Activated naive CD4-positive, alpha-beta T cell treated with anti-CD3 and anti-CD28 coated beads for 36 hours (primary cell): ENCODE measurements at regions of chr19 and their contacts with region 1.

Region 1: GRCh38 chr19:5719961-5720790 is at the starts of genes CATSPERD and LONP1:
- DNase-seq: peak; percentile 99
- H3K4me3 Mint-ChIP-seq: peak within 1 kb of the TSS; percentile 89
- H3K27ac Mint-ChIP-seq: peak within 1 kb of the TSS; percentile 98
- H3K4me1 Mint-ChIP-seq: peaks cover 33% of the 10 kb centered on the region
- H3K27me3 Mint-ChIP-seq: no peaks in the 10 kb centered on the region
- total RNA-seq, gene CATSPERD: not detected
- total RNA-seq, gene LONP1: 223 to 229 TPM

Region 2: DNA sequence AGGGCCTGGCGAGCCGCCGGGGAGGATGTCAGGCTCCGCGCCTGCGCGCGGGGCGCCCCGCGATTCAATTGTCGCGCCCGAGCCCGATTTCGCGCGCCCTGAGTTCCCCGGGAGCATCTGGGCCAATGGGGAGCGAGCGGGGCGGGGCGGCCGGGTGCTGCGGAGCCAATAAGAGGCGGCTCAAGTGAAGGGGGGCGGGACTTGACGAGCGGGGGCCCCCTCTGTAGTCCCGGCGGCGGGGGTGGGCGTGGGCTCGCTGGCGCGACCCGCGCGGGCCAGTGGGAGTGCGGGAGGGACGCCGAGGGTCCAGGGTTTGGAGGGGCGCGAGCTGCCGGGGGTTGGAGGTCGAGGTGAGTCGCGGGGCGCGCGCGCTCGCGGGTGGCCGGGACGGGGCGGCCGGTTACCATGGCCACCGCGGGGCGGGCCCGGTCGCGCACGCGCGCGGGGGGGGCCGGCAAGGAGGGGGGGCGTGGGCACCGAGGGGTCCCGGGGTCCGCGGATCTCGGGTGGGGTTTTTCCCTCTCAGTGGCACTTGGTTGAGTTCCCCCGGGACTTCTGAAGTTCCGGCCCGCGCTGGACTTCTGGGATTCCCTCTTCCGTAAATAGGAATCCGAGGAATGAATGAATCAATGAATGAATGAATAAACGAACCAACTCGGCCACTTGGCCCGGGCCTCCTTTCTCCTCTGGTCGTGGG is 810.1 kb before region 1 on chr19:
- CTCF ChIA-PET with region 1: no interaction called
- intact Hi-C with region 1: loop called (anchors 1 kb)
- DNase-seq: peak; percentile 97
- H3K4me3 Mint-ChIP-seq: peak overlapping the region; percentile 85
- H3K27ac Mint-ChIP-seq: peak overlapping the region; percentile 86
- H3K4me1 Mint-ChIP-seq: peaks cover 53% of the 10 kb centered on the region
- H3K27me3 Mint-ChIP-seq: no peaks in the 10 kb centered on the region

Region 3: GRCh38 chr19:5680437-5681368 is 39.5 kb before region 1 on chr19 and contains the starts of genes HSD11B1L and MICOS13:
- CTCF ChIA-PET with region 1: interaction called, 3 read pairs
- intact Hi-C with region 1: loop called (anchors 1 kb)
- DNase-seq: peak; percentile 99
- H3K4me3 Mint-ChIP-seq: peak within 1 kb of the TSS; percentile 98
- H3K27ac Mint-ChIP-seq: peak within 1 kb of the TSS; percentile 91
- H3K4me1 Mint-ChIP-seq: peaks cover 20% of the 10 kb centered on the region
- H3K27me3 Mint-ChIP-seq: no peaks in the 10 kb centered on the region
- total RNA-seq, gene HSD11B1L: 2.6 to 3.0 TPM
- total RNA-seq, gene MICOS13: 43.3 to 44.8 TPM

Region 4: DNA sequence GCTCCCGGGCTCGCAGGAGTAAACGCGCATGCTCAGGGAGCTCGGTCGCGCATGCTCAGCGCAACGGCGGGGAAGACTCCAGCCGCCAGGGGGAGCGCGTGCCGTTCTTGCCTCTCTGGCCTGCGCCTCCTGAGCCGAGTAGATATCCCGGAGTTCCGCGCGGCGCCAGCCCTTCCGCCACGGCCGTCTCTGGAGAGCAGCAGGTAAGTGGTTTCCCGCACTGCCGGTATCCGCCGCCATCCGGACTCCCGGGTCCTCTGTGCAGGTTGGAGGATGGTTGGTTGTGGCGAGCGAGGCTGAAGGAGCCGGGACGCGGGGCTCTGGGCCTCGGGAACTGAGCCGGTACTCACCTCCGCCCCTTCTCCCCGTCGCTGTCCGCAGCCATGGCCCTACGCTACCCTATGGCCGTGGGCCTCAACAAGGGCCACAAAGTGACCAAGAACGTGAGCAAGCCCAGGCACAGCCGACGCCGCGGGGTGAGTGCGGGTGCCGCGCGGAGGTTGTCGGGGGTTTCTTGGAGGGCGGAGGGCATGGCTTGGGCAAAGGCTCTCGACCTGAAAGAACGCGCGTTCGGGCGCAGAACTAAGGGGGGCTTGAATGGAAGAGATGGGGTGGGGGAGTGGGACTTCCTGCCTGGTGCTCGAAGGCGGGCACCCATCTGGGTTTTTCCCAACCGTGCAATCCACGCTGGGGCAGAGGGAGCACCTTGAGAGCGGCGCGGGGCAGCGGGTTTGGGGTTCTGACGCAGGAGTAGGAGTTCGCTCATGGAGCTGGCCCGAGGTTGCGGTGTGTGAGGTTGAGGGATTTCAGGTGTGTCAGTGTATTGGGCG is 29.8 kb before region 1 on chr19 and contains the start of gene RPL36:
- CTCF ChIA-PET with region 1: interaction called, 37 read pairs
- intact Hi-C with region 1: loop called (anchors 1 kb)
- DNase-seq: peak; percentile 100
- H3K4me3 Mint-ChIP-seq: peak within 1 kb of the TSS; percentile 98
- H3K27ac Mint-ChIP-seq: peak within 1 kb of the TSS; percentile 96
- H3K4me1 Mint-ChIP-seq: peaks cover 22% of the 10 kb centered on the region
- H3K27me3 Mint-ChIP-seq: no peaks in the 10 kb centered on the region
- total RNA-seq, gene RPL36: 1,916 to 2,003 TPM

Region 5: DNA sequence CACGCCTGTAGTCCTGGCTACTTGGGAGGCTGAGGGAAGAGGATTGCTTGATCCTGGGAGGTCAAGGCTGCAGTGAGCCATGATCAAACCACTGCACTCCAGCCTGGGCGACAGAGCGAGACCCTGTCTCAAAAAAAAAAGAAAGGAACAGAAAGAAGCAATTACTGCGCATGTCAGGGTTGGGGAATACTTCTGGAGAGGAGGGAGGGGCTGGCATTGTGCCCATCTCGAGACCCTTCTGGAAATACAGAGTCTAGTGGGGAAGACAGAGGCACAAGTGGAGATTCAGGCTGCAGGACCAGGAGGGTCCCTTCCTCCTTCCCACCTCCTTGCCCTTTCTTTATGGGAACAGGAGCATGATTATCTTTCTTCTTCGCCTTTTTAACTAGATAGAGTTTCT is 33.6 kb after region 1 on chr19:
- CTCF ChIA-PET with region 1: no interaction called
- intact Hi-C with region 1: no loop called
- DNase-seq: no peak
- H3K4me3 Mint-ChIP-seq: no peak overlapping the region
- H3K27ac Mint-ChIP-seq: no peak overlapping the region
- H3K4me1 Mint-ChIP-seq: no peaks in the 10 kb centered on the region
- H3K27me3 Mint-ChIP-seq: peaks cover 2% of the 10 kb centered on the region